Activated CD4-positive, alpha-beta T cell treated with anti-CD3 and anti-CD28 coated beads, Interleukin-2, amount 10 ng/mL, durations not matched to agents 7 days and 5 days (primary cell): ENCODE measurements at regions of chr4 and their contacts with region 1.

Region 1: GRCh38 chr4:174999407-174999806 is 81.2 kb downstream of the ADAM29 start:
- DNase-seq: no peak
- H3K4me3 Mint-ChIP-seq: no peak overlapping the region
- H3K27ac Mint-ChIP-seq: no peak overlapping the region
- H3K4me1 Mint-ChIP-seq: no peaks in the 10 kb centered on the region
- H3K27me3 Mint-ChIP-seq: no peaks in the 10 kb centered on the region

Region 2: GRCh38 chr4:174107746-174108354 is 891.6 kb before region 1 on chr4:
- CTCF ChIA-PET with region 1: interaction called, 10 read pairs
- POLR2A ChIA-PET with region 1: no interaction called
- DNase-seq: no peak
- H3K4me3 Mint-ChIP-seq: no peak overlapping the region
- H3K27ac Mint-ChIP-seq: peak overlapping the region; percentile 63
- H3K4me1 Mint-ChIP-seq: no peaks in the 10 kb centered on the region
- H3K27me3 Mint-ChIP-seq: peaks cover 17% of the 10 kb centered on the region